ENCODE measurements at regions of chr9 and their contacts with region 1.

Region 1: DNA sequence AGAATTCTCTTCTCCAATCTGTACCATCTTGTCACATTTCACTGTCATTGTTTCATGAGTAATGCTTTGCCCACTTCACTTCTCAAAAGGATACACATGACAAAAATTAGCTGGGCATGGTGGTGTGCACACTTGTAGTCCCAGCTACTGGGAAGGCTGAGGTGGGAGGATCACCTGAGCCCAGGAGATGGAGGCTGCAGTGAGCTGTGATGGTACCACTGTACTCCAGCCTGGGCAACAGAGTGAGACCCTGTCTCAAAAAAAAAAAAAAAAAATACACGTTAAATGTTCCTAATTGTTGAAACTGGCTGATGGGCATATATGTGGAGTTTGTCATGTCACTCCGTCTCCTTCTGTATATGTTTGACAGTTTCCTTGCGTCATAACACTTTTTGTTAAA is 36.3 kb upstream of the HSD17B3 start:
- H3K4me3 ChIP-seq: no peak overlapping the region
- H3K27ac ChIP-seq: no peak overlapping the region
- H3K4me1 ChIP-seq: peaks cover 2% of the 10 kb centered on the region; the same call in 1 of the 2 replicates
- CTCF ChIP-seq: no peak

Region 2: GRCh38 chr9:96327694-96328352 is 10.5 kb before region 1 on chr9:
- CTCF ChIA-PET with region 1: interaction called, 23 read pairs
- POLR2A ChIA-PET with region 1: no interaction called
- H3K4me3 ChIP-seq: no peak overlapping the region
- H3K27ac ChIP-seq: no peak overlapping the region
- H3K4me1 ChIP-seq: no peaks in the 10 kb centered on the region
- CTCF ChIP-seq: no peak

Measured in HEK293 (cell line).